CD14-positive monocyte (primary cell): ENCODE measurements at regions of chr12 and their contacts with region 1.

Region 1: GRCh38 chr12:50111693-50112455 is at the start of gene COX14:
- DNase-seq: peak; percentile 99 to 100 (median 99)
- H3K4me3 ChIP-seq: peak within 1 kb of the TSS; percentile 67 to 87 (median 82)
- H3K4me3 Mint-ChIP-seq: peak within 1 kb of the TSS; percentile 98 to 99
- H3K27ac ChIP-seq: peak within 1 kb of the TSS; percentile 98
- H3K27ac Mint-ChIP-seq: peak within 1 kb of the TSS; percentile 98 to 100 (median 99)
- H3K4me1 ChIP-seq: peaks cover 16 to 23% of the 10 kb centered on the region in 2 donors
- H3K4me1 Mint-ChIP-seq: peaks cover 26% of the 10 kb centered on the region
- H3K27me3 ChIP-seq: no peaks in the 10 kb centered on the region
- H3K27me3 Mint-ChIP-seq: peaks cover 0 to 6% (median 2%) of the 10 kb centered on the region in 3 donors
- CTCF ChIP-seq: peak; percentile 17
- polyA plus RNA-seq, gene COX14: 63.8 to 257 (median 231) TPM

Region 2: DNA sequence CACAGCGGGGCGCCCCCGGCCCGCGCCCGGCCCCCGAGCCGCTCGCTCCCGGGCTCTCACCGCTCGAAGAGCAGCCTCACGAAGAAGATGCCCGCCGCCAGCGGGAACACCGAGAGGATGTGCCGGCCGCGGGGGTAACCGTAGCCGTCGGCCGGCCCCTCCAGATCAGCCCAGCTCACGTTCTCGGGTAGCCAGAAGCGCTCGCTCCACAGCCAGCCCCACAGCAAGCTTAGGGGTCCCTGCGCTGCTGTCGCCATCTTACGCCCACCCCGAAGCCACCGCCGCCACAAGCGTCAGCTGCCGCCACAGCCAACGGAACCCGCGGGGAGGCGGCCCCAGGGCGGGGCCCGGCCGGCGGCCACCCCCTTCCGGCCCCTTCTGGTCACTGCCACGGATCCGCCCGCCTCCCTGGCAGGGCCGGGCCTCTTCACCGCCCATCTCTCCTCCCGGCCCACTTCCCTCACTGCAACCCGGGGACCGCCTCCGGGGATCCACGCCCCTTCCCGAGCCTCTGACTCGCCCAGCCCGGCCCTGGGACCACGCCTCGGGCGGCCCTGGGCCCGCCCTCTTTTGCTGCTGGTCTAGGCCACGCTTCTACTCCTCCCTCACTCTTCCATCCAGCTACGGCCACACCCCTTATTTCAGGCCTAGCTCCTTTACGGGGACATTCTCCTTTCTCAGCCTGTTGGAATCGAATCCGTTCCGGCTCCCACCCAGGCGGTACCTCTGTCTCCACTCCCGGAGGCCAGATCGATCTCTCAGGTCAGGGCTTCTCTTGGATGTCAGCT is 55.4 kb after region 1 on chr12 and contains the start of gene CERS5:
- intact Hi-C with region 1: loop called in 1 of 2 experiments (anchors 5 kb)
- DNase-seq: peak; percentile 95 to 98 (median 97)
- H3K4me3 ChIP-seq: peak within 1 kb of the TSS; percentile 69 to 91 (median 82)
- H3K4me3 Mint-ChIP-seq: peak within 1 kb of the TSS; percentile 94 to 97
- H3K27ac ChIP-seq: peak within 1 kb of the TSS; percentile 72 to 85
- H3K27ac Mint-ChIP-seq: peak within 1 kb of the TSS; percentile 87 to 96 (median 94)
- H3K4me1 ChIP-seq: peaks cover 20 to 30% of the 10 kb centered on the region in 2 donors
- H3K4me1 Mint-ChIP-seq: peaks cover 38% of the 10 kb centered on the region
- H3K27me3 ChIP-seq: no peaks in the 10 kb centered on the region
- H3K27me3 Mint-ChIP-seq: no peaks in the 10 kb centered on the region
- CTCF ChIP-seq: no peak
- polyA plus RNA-seq, gene CERS5: 30.6 to 44.4 (median 38.7) TPM